Activated CD4-positive, alpha-beta T cell treated with anti-CD3 and anti-CD28 coated beads, Interleukin-2, amount 10 ng/mL, durations not matched to agents 24 days and 14 days (primary cell): ENCODE measurements at regions of chrX and their contacts with region 1.

Region 1: DNA sequence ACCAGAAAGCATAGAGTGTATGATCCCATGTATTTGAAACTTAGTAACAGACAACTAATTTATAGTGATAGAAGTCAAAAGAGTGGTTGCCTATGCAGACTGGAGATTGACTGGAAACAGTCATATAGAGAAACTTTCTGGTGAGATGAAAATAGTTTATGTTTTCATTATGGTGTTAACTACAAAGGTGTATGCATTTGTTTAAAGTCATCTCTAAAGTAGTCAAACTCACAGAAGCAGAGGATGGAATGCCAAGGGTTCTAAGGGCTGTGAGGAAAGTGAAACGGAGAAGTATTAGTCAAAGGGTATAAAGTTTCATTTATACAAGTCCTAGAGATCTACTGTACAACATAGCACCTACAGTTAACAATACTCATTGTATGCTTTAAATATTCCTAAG is 45.8 kb downstream of the ENOX2 start:
- DNase-seq: peak; percentile 48
- H3K4me3 Mint-ChIP-seq: no peak overlapping the region
- H3K27ac Mint-ChIP-seq: no peak overlapping the region
- H3K4me1 Mint-ChIP-seq: peaks cover 7% of the 10 kb centered on the region
- H3K27me3 Mint-ChIP-seq: no peaks in the 10 kb centered on the region

Region 2: GRCh38 chrX:130758072-130758471 is 99.1 kb before region 1 on chrX:
- intact Hi-C with region 1: loop called (anchors 1 kb)
- DNase-seq: no peak
- H3K4me3 Mint-ChIP-seq: no peak overlapping the region
- H3K27ac Mint-ChIP-seq: no peak overlapping the region
- H3K4me1 Mint-ChIP-seq: no peaks in the 10 kb centered on the region
- H3K27me3 Mint-ChIP-seq: no peaks in the 10 kb centered on the region

Region 3: DNA sequence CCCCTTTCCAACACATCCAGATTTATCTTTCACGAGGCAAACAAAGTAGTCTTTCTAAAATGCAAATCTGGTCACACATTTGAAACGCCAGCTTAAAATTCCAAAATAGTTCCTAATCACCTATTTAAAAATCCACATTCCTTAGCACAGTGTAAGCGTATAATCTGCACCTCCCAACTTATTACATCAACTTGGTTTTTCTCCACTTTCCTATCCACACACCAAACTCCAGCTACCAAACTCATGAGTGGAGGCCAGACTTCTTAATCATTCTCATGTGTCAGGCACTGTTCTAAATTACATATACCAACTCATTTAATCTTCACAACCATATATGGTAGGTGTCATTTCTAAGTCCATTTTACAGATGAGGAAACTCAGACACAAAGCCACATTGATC is 12.0 kb after region 1 on chrX:
- intact Hi-C with region 1: no loop called
- DNase-seq: no peak
- H3K4me3 Mint-ChIP-seq: no peak overlapping the region
- H3K27ac Mint-ChIP-seq: no peak overlapping the region
- H3K4me1 Mint-ChIP-seq: no peaks in the 10 kb centered on the region
- H3K27me3 Mint-ChIP-seq: no peaks in the 10 kb centered on the region